Activated T-helper 1 cell treated with anti-CD3 and anti-CD28 coated beads, Interleukin-12 subunit alpha, Interleukin-12 subunit beta, Interleukin-2, Interleukin-4 antibody, amounts not matched to agents 30 ng/mL and 10 ng/mL and 1 ng/mL, durations not matched to agents 14 hours and 24 hours and 36 hours (primary cell): ENCODE measurements at regions of chr11 and their contacts with region 1.

Region 1: DNA sequence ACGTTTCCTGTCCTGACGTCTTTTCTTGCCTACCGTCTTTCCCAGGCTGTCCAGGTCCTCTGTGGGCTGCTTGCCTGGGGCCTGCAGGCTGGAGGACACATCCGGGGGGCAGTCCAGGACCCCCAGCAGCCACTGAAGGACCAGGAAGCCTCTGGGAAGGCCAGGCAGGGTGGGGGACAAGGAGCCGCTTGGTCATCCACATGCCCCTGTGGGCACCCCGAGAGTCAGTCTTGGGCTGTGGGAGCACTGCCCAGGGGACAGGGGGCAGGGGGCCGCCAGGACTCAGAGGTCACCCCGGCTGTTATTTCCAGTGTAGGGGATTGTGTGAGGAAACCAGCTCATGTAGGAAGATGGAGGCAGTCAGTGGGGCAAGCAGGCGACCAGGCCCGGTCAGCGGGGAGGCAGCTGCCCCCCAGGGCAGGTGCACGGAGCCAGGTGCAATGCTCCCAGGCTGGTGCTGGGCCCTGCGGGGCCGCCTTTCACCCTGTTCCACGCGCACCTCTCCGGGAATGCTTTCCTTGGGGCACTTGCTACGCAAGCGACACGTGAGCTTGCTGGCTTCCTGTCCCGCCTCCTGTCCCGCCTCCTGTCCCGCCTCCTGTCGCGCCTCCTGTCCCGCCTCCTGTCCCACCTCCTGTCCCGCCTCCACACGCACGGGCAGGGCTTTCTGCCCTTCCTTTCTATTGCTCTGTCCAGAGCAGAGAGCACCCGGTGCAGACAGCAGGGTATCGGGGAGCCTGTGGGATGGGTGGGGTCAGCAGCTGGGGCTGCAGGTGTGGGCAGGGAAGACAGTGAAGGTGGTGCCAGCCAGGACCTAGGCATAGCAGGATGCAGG is 39.5 kb downstream of the MUC5B start:
- DNase-seq: peak; percentile 70
- H3K4me3 Mint-ChIP-seq: peak overlapping the region; percentile 42
- H3K27ac Mint-ChIP-seq: peak overlapping the region; percentile 63
- H3K4me1 Mint-ChIP-seq: peaks cover 4% of the 10 kb centered on the region
- H3K27me3 Mint-ChIP-seq: no peaks in the 10 kb centered on the region

Region 2: DNA sequence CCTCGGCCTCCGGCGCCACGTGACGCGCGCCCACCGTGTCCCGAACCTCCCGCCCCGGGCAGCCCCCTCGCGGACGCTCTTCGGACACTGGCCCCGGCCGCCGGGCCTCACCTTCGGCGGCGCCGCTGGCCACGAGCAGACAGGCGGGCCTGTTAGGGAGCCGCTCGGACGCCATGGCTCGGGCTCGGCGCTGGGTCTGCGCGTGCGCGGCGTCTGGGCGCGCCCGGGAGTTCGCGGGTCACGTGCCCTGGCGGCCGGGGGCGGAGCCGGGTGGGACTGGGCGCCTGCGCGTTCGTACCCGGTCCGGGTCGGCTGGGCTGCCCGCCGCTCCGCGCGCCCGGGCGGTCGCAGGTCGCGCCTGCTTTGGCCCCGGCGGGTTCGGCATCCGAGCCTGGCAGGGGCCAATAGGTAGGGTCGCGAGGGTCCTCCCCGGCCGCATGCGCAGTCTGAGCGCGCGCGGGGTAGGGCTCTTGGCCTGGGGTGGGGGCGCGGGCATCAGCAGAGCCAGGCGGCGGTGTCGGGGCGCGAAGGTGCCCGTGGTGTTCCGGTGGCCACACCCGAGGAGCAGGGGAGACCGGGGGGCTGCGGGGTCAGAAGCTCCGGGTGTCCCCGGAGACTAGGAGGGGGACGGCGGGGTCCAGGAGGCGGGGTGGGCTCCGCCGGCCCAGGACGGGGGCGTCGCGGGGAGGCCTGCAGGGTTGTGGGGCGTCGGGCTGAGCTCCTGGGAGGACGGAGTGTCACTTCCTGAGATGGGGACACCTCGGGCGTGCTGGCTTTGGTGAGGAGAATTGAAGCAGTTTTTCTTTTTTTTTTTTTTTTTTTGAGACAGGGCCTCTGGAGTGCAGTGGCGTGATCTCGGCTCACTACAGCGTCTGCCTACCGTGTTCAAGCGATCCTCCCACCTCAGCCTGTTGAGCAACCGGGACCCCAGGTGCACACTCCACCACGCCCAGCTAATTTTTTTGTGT is 484.8 kb before region 1 on chr11 and contains the start of gene GATD1:
- intact Hi-C with region 1: no loop called
- DNase-seq: peak; percentile 94
- H3K4me3 Mint-ChIP-seq: peak within 1 kb of the TSS; percentile 84
- H3K27ac Mint-ChIP-seq: peak within 1 kb of the TSS; percentile 53
- H3K4me1 Mint-ChIP-seq: peaks cover 14% of the 10 kb centered on the region
- H3K27me3 Mint-ChIP-seq: no peaks in the 10 kb centered on the region
- total RNA-seq, gene GATD1: 70.4 and 81.7 TPM in 2 replicates

Region 3: DNA sequence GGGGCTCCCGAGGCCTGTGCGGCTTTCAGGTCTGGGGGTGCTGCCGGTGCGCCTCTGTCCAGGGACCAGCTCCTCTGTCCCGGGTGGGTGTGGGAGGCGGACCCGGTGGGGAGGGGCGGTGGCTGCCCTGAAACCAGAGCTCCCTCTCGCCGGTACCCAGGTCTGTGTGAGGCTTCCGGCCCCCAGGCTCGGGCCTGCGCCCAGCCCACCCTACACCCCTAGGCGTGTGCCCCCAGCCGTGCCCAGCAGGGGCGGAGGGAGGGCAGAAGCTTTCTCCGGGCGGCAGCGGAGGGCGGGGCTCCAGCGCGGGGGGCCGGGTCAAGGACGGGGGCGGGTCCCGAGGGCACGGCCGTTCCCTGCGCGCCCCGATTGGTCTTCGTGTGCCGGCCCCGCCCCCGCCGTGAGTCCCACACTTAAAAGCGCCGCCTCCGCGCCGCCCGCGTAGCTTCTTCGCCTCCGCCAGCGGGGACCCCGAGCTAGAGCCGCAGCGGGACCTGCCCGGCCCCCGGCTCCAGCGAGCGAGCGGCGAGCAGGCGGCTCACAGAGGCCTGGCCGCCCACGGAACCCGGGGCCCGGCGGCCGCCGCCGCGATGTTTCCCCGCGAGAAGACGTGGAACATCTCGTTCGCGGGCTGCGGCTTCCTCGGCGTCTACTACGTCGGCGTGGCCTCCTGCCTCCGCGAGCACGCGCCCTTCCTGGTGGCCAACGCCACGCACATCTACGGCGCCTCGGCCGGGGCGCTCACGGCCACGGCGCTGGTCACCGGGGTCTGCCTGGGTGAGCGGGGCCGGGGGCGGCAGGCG is 443.1 kb before region 1 on chr11:
- intact Hi-C with region 1: no loop called
- DNase-seq: peak; percentile 86
- H3K4me3 Mint-ChIP-seq: peak overlapping the region; percentile 87
- H3K27ac Mint-ChIP-seq: no peak overlapping the region
- H3K4me1 Mint-ChIP-seq: no peaks in the 10 kb centered on the region
- H3K27me3 Mint-ChIP-seq: no peaks in the 10 kb centered on the region

Region 4: GRCh38 chr11:1335811-1336761 is 73.7 kb after region 1 on chr11:
- intact Hi-C with region 1: loop called (anchors 5 kb)
- DNase-seq: peak; percentile 38
- H3K4me3 Mint-ChIP-seq: peak overlapping the region; percentile 77
- H3K27ac Mint-ChIP-seq: peak overlapping the region; percentile 59
- H3K4me1 Mint-ChIP-seq: peaks cover 8% of the 10 kb centered on the region
- H3K27me3 Mint-ChIP-seq: peaks cover 9% of the 10 kb centered on the region

Region 5: DNA sequence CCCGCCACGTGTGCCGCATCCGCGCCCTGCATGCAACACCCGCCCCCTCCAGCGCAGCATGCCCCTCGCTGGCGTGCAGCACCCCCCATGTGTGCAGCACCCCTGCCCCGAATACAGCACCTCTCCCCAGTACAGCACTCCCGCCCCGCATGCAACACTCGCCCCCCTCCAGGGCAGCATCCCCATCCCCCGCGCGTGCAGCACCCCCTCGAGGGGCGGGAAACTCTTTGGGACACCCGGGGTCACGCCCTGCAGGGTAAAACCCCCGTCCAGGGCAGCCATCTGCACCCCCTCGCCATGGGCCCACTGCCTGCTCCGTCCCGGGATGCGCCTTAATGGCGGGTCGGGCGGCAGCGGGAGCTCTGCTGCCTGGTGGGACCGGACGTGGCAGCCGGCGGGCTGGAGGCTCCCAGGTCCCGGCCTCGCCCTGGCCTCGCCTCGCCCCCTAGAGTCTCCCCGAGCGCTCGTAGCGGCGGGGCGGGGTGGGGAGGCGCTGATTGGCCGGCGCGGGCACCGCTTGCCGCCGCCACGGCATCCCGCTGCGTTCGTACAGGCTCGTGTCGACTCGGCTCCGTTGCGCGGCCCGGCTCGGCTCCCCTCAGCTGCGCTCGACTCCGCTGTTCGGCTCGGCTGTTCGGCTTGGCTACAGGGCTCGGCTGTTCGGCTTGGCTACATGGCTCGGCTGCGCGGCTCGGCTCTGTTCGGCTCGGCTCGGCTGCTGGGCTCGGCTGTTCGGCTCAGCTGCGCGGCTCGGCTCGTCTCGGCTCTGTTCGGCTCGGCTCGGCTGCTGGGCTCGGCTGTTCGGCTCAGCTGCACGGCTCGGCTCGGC is 126.9 kb after region 1 on chr11:
- intact Hi-C with region 1: loop called (anchors 2 kb)
- DNase-seq: peak; percentile 93
- H3K4me3 Mint-ChIP-seq: peak overlapping the region; percentile 30
- H3K27ac Mint-ChIP-seq: no peak overlapping the region
- H3K4me1 Mint-ChIP-seq: peaks cover 5% of the 10 kb centered on the region
- H3K27me3 Mint-ChIP-seq: peaks cover 33% of the 10 kb centered on the region

Region 6: DNA sequence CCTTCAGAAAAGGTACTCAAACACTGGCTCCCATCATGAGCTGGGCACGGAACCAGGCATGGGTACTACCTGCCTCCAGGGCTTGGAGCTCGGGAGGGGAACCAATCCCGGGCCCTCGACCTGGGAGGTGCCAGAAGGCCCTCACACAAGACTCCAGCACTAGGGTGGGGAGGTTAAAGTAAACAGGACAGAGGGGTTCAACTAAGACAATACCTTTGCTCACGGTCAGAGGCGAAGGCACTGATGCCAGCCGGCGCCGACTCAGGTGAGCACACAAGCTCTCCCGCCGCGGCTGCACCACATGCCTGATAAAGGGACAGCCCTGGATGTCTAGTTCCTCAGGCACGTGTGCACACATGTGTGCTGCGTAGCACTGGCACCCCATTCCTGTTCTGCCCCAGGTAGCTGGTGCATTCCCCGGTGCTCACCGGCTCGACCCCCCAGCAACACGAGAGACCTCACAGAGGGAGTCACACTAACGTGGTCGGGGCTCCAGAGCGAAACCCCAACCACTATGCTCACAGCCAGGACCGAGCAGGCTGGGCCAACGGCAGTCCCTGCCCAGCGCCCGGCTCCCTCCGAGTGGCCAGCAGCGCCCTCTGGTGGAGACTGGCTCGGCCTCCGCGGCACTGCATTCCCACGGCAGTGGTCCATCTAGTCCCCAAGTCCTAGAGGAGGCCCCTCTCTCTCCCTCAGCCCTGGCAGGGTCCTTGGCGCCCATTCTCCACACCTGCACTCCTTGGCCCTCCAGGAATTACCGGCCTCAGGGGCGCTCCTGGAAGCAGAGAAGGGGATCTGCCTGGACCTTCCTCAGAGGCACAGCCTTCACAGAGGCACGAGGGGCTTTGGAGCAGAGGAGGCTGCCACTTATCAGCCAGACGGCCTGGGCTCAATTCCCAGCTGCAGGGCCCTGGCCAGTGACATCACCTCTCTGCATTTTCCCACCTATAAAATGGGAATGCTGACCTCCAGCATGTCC is 253.0 kb after region 1 on chr11:
- intact Hi-C with region 1: loop called (anchors 1 kb)
- DNase-seq: peak; percentile 43
- H3K4me3 Mint-ChIP-seq: no peak overlapping the region
- H3K27ac Mint-ChIP-seq: no peak overlapping the region
- H3K4me1 Mint-ChIP-seq: peaks cover 6% of the 10 kb centered on the region
- H3K27me3 Mint-ChIP-seq: no peaks in the 10 kb centered on the region